ENCODE measurements at regions of chr22 and their contacts with region 1.

Region 1: DNA sequence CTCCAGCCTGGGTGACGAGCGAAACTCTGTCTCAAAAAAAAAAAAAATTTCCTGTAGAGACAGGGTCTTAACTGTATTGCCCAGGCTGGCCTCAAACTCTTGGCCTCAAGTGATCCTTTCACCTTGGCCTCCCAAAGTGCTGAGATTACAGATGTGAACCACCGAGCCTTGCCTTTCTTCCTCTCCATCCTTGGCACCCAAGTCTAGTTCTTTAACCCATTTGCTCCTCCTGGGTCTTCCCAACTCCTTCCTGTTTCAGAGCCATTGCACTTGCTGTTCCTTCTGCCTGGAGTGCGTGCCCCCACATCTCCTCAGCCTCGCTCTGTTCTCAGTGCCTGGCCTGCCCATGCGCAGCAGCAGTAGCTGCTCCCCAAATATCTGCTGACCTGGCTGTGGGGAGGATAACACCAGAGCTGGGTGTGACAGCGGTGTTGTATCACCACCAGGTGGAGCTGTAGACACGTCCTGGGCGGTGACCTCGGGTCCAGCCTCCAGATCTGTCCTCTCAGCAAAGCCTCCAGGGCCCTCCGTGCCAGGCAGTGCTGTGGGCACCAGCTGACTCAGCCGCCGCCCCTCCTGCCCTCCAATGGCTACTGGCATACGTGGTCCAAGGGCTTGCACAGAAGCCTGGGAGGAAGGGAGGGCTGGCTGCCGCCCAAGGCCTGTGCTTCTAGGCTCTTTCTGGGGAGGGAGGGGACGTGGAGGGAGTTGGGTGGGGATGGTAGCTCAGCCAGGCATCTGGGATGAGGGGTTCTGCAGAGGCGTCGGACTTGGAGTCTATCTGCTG is 22.0 kb downstream of the TEF start:
- DNase-seq: peak; percentile 70 to 88 (median 79)
- H3K4me3 ChIP-seq: no peak overlapping the region
- H3K4me3 Mint-ChIP-seq: peak overlapping the region in 1 of 7 donors; percentile 49
- H3K27ac ChIP-seq: no peak overlapping the region
- H3K27ac Mint-ChIP-seq: peak overlapping the region in 1 of 8 donors; percentile 51
- H3K4me1 ChIP-seq: no peaks in the 10 kb centered on the region
- H3K4me1 Mint-ChIP-seq: peaks cover 4 to 12% (median 5%) of the 10 kb centered on the region in 3 donors
- H3K27me3 ChIP-seq: no peaks in the 10 kb centered on the region
- H3K27me3 Mint-ChIP-seq: no peaks in the 10 kb centered on the region

Region 2: DNA sequence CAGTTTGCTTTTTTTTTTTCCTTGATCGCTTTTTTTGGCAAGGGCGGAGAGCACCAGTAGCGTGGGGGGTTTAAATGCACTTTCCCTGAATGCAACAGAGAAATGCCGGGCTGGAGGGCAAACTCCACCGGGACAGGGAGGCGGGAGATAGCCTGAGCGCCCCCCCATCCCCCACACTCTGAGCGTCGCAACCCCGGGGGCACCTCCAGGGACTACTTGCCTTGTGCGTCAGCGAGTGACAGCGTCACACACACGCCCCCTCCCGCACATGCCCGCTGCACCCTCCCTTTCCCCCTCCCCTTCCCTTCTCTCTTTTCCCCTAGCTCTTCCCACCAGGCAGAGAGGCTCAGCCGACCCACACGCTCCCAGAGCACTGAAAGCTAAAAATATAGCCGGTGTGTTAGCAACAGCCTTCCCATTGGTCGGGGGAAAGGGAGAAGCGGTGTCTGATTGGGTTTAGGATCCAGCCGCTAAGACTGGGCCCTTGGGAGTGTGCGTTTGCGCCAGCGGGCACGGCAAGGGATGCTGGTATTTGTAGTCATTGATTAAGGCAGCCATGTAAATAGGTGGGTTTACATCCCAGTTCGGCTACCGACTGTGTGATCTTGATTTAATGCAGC is 44.6 kb after region 1 on chr22:
- CTCF ChIA-PET with region 1: interaction called, 18 read pairs
- POLR2A ChIA-PET with region 1: interaction called, 4 read pairs
- DNase-seq: peak; percentile 82 to 94 (median 90)
- H3K4me3 ChIP-seq: peak overlapping the region; percentile 96
- H3K4me3 Mint-ChIP-seq: peak overlapping the region; percentile 90 to 98 (median 95)
- H3K27ac ChIP-seq: peak overlapping the region; percentile 96
- H3K27ac Mint-ChIP-seq: peak overlapping the region; percentile 91 to 98 (median 96)
- H3K4me1 ChIP-seq: peaks cover 5% of the 10 kb centered on the region
- H3K4me1 Mint-ChIP-seq: peaks cover 20 to 27% (median 23%) of the 10 kb centered on the region in 3 donors
- H3K27me3 ChIP-seq: no peaks in the 10 kb centered on the region
- H3K27me3 Mint-ChIP-seq: no peaks in the 10 kb centered on the region

Region 3: DNA sequence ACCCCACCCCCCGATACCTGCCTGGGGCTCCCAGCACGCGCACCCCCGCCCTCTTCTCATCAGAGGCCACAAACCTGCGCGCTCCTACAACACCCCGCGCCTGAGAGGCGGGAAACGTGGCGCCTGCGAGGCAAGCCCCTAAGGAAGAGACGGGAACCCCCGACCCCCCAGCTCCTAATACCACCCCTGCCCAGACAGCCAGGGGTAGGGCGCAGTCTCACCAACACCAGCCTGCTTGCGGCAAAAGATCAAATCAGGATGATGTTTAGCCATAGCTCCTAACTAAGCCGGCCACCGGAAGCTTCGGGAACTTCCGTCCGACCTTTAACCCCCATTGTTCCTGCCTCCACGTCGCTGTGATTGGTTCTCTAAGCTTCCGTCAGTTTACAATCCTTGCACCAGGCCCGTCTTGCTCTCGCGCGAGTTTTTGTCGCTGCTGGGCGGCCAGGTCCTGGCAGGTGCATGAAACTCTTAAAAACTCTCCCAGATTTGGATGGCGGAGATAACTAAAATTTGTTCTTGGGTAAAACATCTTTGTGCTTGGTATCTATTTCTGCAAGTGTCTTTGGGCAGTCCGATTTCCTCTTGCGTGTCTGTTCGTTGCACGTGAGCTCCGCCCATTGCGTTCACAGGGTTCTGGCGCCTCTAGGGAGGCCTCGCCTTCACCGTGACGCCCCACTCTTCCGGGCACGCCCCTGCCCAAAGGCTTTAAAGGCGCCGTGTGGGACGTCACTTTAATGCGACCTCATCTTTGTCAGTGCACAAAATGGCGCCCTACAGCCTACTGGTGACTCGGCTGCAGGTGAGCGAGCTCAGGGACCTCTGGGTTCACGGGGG is 64.9 kb after region 1 on chr22 and contains the starts of genes ACO2 and PHF5A:
- CTCF ChIA-PET with region 1: interaction called, 18 read pairs
- POLR2A ChIA-PET with region 1: interaction called, 5 read pairs
- DNase-seq: peak; percentile 96 to 99 (median 98)
- H3K4me3 ChIP-seq: peak within 1 kb of the TSS; percentile 72
- H3K4me3 Mint-ChIP-seq: peak within 1 kb of the TSS; percentile 85 to 93 (median 89)
- H3K27ac ChIP-seq: peak within 1 kb of the TSS; percentile 99
- H3K27ac Mint-ChIP-seq: peak within 1 kb of the TSS; percentile 97 to 100 (median 99)
- H3K4me1 ChIP-seq: peaks cover 22% of the 10 kb centered on the region
- H3K4me1 Mint-ChIP-seq: peaks cover 44 to 71% (median 60%) of the 10 kb centered on the region in 3 donors
- H3K27me3 ChIP-seq: no peaks in the 10 kb centered on the region
- H3K27me3 Mint-ChIP-seq: no peaks in the 10 kb centered on the region
- total RNA-seq, gene ACO2: 112 to 114 TPM
- total RNA-seq, gene PHF5A: 120 to 125 TPM

Region 4: GRCh38 chr22:41501209-41501608 is 97.5 kb after region 1 on chr22:
- CTCF ChIA-PET with region 1: interaction called, 12 read pairs
- POLR2A ChIA-PET with region 1: no interaction called
- DNase-seq: peak in 2 of 5 donors; percentile 11 to 13
- H3K4me3 ChIP-seq: no peak overlapping the region
- H3K4me3 Mint-ChIP-seq: no peak overlapping the region
- H3K27ac ChIP-seq: no peak overlapping the region
- H3K27ac Mint-ChIP-seq: no peak overlapping the region
- H3K4me1 ChIP-seq: no peaks in the 10 kb centered on the region
- H3K4me1 Mint-ChIP-seq: peaks cover 3 to 6% (median 5%) of the 10 kb centered on the region in 3 donors
- H3K27me3 ChIP-seq: no peaks in the 10 kb centered on the region
- H3K27me3 Mint-ChIP-seq: no peaks in the 10 kb centered on the region

Region 5: DNA sequence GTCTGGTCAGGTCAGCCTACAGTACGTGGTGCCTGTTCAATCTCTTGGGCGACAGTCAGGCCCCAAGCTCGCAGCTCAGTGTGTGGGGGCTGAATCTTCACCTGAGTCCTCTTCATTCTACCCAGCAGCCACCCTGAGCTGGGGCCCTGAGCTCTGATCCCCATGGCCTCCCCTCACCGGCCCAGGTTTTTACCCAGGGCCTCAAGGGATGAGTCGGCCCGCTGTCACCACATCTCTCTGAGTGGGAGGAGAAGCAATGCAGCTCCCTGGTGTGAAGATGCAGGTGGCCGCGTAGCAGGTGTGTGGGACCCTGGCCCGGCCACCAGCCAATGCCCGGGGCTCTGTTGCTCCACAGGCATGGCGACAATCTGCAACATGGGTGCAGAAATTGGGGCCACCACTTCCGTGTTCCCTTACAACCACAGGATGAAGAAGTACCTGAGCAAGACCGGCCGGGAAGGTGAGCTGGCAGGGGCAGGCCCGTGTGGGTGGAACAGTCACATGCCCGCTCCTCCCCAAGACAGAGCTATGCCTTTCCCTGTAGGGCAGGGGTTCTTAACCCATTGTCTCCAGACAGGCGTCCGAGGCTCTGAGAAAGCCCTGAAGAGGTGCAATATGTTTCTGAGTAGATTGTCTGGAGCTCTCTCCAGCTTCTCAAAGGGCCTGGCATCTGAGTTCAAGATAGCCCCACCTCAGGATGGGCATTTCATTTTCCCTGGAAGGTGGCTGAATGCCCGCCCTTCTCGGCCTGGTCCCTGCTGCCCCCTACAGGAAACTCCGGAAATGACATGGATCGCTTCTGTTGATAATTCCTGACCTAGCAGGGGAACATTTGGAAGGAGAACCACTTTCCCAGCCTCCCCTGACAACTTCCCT is 113.7 kb after region 1 on chr22:
- CTCF ChIA-PET with region 1: interaction called, 119 read pairs
- POLR2A ChIA-PET with region 1: no interaction called
- DNase-seq: peak in 4 of 5 donors; percentile 11 to 60 (median 32)
- H3K4me3 ChIP-seq: no peak overlapping the region
- H3K4me3 Mint-ChIP-seq: no peak overlapping the region
- H3K27ac ChIP-seq: no peak overlapping the region
- H3K27ac Mint-ChIP-seq: peak overlapping the region in 1 of 8 donors; percentile 57
- H3K4me1 ChIP-seq: no peaks in the 10 kb centered on the region
- H3K4me1 Mint-ChIP-seq: no peaks in the 10 kb centered on the region
- H3K27me3 ChIP-seq: no peaks in the 10 kb centered on the region
- H3K27me3 Mint-ChIP-seq: no peaks in the 10 kb centered on the region

Region 6: GRCh38 chr22:41526837-41527799 is 123.4 kb after region 1 on chr22:
- CTCF ChIA-PET with region 1: interaction called, 119 read pairs
- POLR2A ChIA-PET with region 1: interaction called, 10 read pairs
- DNase-seq: peak; percentile 54 to 76 (median 64)
- H3K4me3 ChIP-seq: no peak overlapping the region
- H3K4me3 Mint-ChIP-seq: no peak overlapping the region
- H3K27ac ChIP-seq: no peak overlapping the region
- H3K27ac Mint-ChIP-seq: peak overlapping the region in 6 of 8 donors; percentile 37 to 94 (median 75)
- H3K4me1 ChIP-seq: peaks cover 15% of the 10 kb centered on the region
- H3K4me1 Mint-ChIP-seq: peaks cover 14 to 27% (median 16%) of the 10 kb centered on the region in 3 donors
- H3K27me3 ChIP-seq: no peaks in the 10 kb centered on the region
- H3K27me3 Mint-ChIP-seq: no peaks in the 10 kb centered on the region

Region 7: GRCh38 chr22:41532908-41533825 is 129.4 kb after region 1 on chr22:
- CTCF ChIA-PET with region 1: interaction called, 119 read pairs
- POLR2A ChIA-PET with region 1: interaction called, 6 read pairs
- DNase-seq: peak; percentile 38 to 75 (median 58)
- H3K4me3 ChIP-seq: no peak overlapping the region
- H3K4me3 Mint-ChIP-seq: no peak overlapping the region
- H3K27ac ChIP-seq: no peak overlapping the region
- H3K27ac Mint-ChIP-seq: peak overlapping the region in 7 of 8 donors; percentile 3 to 79 (median 50)
- H3K4me1 ChIP-seq: no peaks in the 10 kb centered on the region
- H3K4me1 Mint-ChIP-seq: peaks cover 0 to 7% (median 3%) of the 10 kb centered on the region in 3 donors
- H3K27me3 ChIP-seq: no peaks in the 10 kb centered on the region
- H3K27me3 Mint-ChIP-seq: no peaks in the 10 kb centered on the region